Activated CD4-positive, alpha-beta T cell treated with anti-CD3 and anti-CD28 coated beads for 36 hours (primary cell): ENCODE measurements at regions of chr3 and their contacts with region 1.

Region 1: DNA sequence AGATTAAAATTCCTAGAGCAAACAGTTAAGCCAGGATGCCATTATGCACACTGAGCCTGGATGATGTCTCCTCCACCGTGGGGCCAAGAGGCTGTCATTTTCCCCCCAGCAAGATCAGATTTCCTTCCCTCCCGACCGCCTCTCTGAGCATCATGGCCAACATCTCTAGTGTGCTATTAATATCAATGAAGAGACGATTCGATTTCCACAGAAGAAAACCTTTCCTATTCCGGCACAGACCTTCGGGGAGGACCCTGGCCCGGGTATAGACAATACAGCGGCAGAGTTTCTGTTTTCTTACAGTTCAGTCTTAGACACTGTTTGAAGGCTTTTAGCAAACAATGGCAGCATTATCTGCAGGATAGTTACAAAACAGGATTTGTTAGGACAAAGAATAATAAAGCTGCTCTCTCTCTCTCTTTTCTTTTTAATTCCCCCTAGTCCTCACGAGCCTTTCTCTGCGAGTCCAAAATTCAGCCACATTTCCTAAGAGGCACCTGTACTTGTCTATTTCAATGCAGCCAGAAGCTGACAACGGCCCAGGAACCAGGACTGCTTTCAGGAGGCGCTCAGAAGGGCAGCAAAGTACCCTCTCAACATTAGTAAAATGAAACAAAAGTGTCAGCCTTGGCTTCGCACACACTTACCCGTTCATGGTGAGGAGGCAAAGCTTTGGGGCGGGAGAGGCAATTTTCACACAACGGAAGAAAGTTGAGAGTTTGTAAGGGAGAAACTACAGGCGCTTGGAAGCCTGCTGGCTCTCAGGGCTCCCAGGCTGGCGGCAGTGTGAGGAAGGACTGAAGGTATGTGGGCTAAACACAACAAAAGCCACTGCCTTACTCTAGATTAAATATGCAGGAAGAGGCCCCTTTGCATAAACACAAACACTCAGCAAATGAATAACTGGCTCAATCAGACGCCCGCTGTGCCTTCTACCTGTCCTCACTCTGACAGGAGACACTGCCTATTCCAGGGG is 278.0 kb downstream of the FOXP1 start:
- DNase-seq: peak; percentile 38
- ATAC-seq: peak; percentile 8
- H3K4me3 Mint-ChIP-seq: peak overlapping the region; percentile 80
- H3K27ac Mint-ChIP-seq: peak overlapping the region; percentile 96
- H3K4me1 Mint-ChIP-seq: peaks cover 81% of the 10 kb centered on the region
- H3K27me3 Mint-ChIP-seq: no peaks in the 10 kb centered on the region

Region 2: GRCh38 chr3:70539908-70540307 is 765.6 kb before region 1 on chr3:
- CTCF ChIA-PET with region 1: no interaction called
- POLR2A ChIA-PET with region 1: no interaction called
- intact Hi-C with region 1: loop called in 1 of 2 experiments (anchors 10 kb)
- DNase-seq: no peak
- ATAC-seq: no peak
- H3K4me3 Mint-ChIP-seq: no peak overlapping the region
- H3K27ac Mint-ChIP-seq: no peak overlapping the region
- H3K4me1 Mint-ChIP-seq: no peaks in the 10 kb centered on the region
- H3K27me3 Mint-ChIP-seq: peaks cover 5% of the 10 kb centered on the region

Region 3: DNA sequence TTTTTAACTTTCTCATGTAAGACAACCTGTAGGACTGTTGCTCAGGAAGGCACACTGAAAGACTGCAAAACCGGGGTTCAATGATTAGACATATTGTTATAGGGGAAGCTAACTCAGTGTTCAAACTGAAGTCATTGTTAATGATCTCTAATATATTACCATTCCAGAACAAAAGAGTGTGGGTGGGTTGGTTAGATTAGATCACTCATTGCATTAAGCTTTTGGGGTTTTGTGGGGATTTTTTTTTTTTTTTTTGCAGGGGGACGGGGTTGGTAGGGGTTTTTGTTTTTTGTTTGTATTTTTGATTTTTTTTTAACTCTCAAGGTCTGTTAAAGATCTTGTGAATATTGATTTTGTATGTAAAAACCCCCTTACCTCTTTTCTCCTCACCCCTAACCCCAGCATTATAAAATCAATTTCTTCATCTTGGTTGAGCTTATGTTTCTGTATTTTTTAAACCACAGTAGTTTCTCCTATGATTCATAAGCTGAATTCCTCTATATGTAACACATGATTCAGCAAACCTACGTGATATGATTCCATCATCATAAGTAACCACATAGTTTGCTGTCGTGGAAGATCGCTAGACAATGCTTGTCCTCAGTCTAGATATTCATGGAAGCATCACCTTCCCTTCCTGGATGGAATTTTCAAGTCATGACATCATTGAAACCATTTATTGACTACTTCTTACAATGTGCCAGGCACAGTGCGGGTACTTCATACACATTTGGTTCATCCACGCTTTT is 448.9 kb before region 1 on chr3:
- CTCF ChIA-PET with region 1: no interaction called
- POLR2A ChIA-PET with region 1: no interaction called
- intact Hi-C with region 1: loop called in 1 of 2 experiments (anchors 5 kb)
- DNase-seq: peak; percentile 8
- ATAC-seq: peak; percentile 84
- H3K4me3 Mint-ChIP-seq: no peak overlapping the region
- H3K27ac Mint-ChIP-seq: no peak overlapping the region
- H3K4me1 Mint-ChIP-seq: peaks cover 24% of the 10 kb centered on the region
- H3K27me3 Mint-ChIP-seq: peaks cover 33% of the 10 kb centered on the region

Region 4: GRCh38 chr3:71018799-71019198 is 286.7 kb before region 1 on chr3:
- CTCF ChIA-PET with region 1: no interaction called
- POLR2A ChIA-PET with region 1: no interaction called
- intact Hi-C with region 1: no loop called
- DNase-seq: no peak
- ATAC-seq: no peak
- H3K4me3 Mint-ChIP-seq: no peak overlapping the region
- H3K27ac Mint-ChIP-seq: peak overlapping the region; percentile 69
- H3K4me1 Mint-ChIP-seq: peaks cover 58% of the 10 kb centered on the region
- H3K27me3 Mint-ChIP-seq: no peaks in the 10 kb centered on the region

Region 5: GRCh38 chr3:71130471-71131374 is 174.8 kb before region 1 on chr3:
- CTCF ChIA-PET with region 1: interaction called, 4 read pairs
- POLR2A ChIA-PET with region 1: interaction called, 4 read pairs
- intact Hi-C with region 1: loop called (anchors 1 to 2 kb)
- DNase-seq: peak; percentile 82
- ATAC-seq: peak; percentile 61
- H3K4me3 Mint-ChIP-seq: peak overlapping the region; percentile 90
- H3K27ac Mint-ChIP-seq: peak overlapping the region; percentile 99
- H3K4me1 Mint-ChIP-seq: peaks cover 71% of the 10 kb centered on the region
- H3K27me3 Mint-ChIP-seq: no peaks in the 10 kb centered on the region

Region 6: DNA sequence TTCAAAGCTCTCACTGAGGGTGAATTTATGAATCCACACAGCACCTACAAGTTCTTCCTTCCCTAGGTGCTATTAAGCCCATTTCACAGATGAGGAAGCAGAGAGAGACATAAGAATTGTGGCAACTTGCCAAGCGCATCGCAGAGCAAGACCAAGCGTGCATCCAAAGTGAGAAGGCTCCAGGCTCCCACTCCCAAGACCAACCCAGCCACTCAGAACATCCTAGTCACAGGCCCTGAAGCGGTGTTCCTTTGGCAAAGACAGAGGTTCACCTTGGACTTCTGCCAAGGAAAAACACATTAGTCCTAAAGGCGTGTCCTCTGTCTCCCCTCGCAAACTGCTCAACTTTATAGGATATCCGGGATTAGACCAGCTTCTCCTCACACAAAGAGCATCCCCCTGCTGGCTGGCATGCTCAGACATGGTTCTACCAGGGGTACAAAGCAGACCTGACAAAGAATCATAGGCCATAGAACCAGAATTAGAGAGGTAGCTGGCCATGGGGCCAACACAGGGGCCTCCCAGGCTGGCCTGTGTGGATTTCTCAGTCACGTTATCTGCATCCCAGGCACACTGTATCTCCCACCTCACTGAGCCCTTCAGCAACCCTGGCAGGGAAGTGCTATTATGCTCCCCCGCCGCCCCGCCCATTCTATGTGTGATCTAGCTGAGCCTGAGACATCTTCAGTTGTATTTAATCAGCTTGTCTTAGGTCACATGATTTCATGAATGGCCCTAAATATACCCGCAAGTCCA is 117.8 kb after region 1 on chr3:
- CTCF ChIA-PET with region 1: interaction called, 4 read pairs
- POLR2A ChIA-PET with region 1: no interaction called
- intact Hi-C with region 1: loop called in 1 of 2 experiments (anchors 1 kb)
- DNase-seq: no peak
- ATAC-seq: no peak
- H3K4me3 Mint-ChIP-seq: no peak overlapping the region
- H3K27ac Mint-ChIP-seq: peak overlapping the region; percentile 92
- H3K4me1 Mint-ChIP-seq: peaks cover 94% of the 10 kb centered on the region
- H3K27me3 Mint-ChIP-seq: no peaks in the 10 kb centered on the region

Region 7: DNA sequence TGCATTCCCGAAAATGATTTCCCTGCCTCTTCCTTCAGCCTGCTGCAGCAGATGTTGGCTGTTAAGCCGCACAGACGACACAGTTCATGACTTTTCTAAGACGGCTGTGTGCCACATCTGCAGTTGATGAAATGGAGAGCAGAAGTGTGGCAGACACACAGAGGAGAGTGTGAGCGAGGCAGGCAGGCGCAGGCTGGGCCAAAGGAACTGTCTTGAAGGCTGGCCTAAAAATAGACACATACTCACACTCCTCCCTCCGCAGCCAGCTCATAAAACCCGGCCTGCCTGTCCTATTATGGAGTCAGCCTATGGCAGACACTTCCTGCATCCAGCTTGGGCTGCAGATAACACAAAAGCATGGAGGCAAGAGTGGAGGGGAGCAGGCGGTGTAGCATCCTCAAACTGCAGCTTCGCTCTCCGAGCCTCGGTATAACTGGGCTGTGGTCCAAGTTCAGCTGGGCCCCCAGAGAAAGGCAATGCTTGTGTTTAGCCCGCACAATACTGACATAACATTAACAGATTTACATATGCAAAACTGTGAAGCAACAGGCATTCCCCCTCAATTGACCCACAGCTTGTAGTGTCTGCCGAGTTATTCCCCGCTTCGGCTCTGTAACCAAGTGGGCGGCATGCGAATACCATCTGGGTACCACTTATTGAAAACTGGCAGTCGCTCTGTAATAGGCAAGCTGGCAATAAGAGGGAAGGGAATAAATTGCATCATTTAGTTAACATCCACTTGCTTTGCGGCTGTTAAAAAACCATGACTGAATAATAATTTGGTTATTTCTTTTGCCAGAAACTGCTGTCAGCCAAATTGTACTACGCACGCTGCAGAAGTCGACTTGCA is 237.2 kb after region 1 on chr3:
- CTCF ChIA-PET with region 1: interaction called, 3 read pairs
- POLR2A ChIA-PET with region 1: no interaction called
- intact Hi-C with region 1: loop called in 1 of 2 experiments (anchors 1 kb)
- DNase-seq: peak; percentile 56
- ATAC-seq: peak; percentile 45
- H3K4me3 Mint-ChIP-seq: no peak overlapping the region
- H3K27ac Mint-ChIP-seq: no peak overlapping the region
- H3K4me1 Mint-ChIP-seq: peaks cover 20% of the 10 kb centered on the region
- H3K27me3 Mint-ChIP-seq: peaks cover 10% of the 10 kb centered on the region